Activated naive CD4-positive, alpha-beta T cell treated with anti-CD3 and anti-CD28 coated beads, Interleukin-2, amount 10 ng/mL, durations not matched to agents 7 days and 5 days (primary cell): ENCODE measurements at regions of chr15 and their contacts with region 1.

Region 1: GRCh38 chr15:64153480-64154367 is 2.2 kb downstream of the SNX22 start:
- DNase-seq: peak; percentile 95
- H3K4me3 Mint-ChIP-seq: peak overlapping the region; percentile 35
- H3K27ac Mint-ChIP-seq: peak overlapping the region; percentile 80
- H3K4me1 Mint-ChIP-seq: peaks cover 44% of the 10 kb centered on the region
- H3K27me3 Mint-ChIP-seq: peaks cover 42% of the 10 kb centered on the region

Region 2: GRCh38 chr15:64093627-64094417 is 59.9 kb before region 1 on chr15 and contains the start of gene CIAO2A:
- CTCF ChIA-PET with region 1: interaction called, 10 read pairs
- DNase-seq: peak; percentile 98
- H3K4me3 Mint-ChIP-seq: peak within 1 kb of the TSS; percentile 95
- H3K27ac Mint-ChIP-seq: peak within 1 kb of the TSS; percentile 98
- H3K4me1 Mint-ChIP-seq: peaks cover 80% of the 10 kb centered on the region
- H3K27me3 Mint-ChIP-seq: no peaks in the 10 kb centered on the region